CD8-positive, alpha-beta T cell (primary cell): ENCODE measurements at regions of chr17 and their contacts with region 1.

Region 1: DNA sequence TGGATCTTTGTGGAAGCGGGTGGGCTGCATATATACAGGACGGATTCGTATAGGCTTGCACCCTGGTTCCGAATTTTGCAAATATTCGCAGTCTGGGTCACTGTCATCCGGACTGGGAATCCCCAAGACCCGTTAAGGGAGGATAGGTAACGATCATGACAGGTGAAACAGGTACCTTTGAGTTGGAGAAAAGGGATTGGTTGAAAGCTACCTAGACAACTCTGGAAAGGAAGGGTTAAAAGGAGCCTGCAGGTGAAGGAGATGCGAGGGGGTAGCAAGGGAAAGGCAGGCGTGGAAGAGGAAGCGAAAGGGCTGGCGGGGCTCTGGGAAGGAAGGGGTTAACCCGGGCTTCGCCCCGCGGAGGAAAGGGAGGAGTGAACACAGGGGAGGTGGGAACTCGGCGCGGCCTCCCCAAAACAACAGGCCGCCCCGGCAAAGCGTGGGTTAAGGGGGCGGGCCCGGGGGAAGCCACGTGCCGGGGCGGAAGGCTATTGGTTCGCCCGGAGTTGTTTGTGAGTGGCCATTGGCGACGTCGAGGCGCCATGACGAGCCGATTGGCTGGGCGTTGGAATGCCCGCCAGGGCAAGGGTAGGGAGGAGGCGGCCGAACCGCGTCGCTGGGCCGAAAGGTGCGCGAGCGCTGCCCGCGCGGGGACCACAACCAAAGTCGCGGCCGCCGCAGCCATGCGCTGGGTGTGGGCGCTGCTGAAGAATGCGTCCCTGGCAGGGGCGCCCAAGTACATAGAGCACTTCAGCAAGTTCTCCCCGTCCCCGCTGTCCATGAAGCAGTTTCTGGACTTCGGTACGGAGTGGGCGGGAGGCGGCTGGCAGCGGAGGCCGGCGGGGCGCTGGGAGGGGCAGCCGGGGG is at the start of gene PDK2:
- DNase-seq: peak; percentile 94 to 98 (median 97)
- ATAC-seq: peak; percentile 94
- H3K4me3 ChIP-seq: peak within 1 kb of the TSS; percentile 69 to 80
- H3K4me3 Mint-ChIP-seq: peak within 1 kb of the TSS; percentile 99
- H3K27ac ChIP-seq: peak within 1 kb of the TSS; percentile 71 to 82
- H3K27ac Mint-ChIP-seq: peak within 1 kb of the TSS; percentile 97
- H3K4me1 ChIP-seq: peaks cover 15% of the 10 kb centered on the region
- H3K4me1 Mint-ChIP-seq: peaks cover 34% of the 10 kb centered on the region
- H3K27me3 ChIP-seq: no peaks in the 10 kb centered on the region
- H3K27me3 Mint-ChIP-seq: no peaks in the 10 kb centered on the region
- CTCF ChIP-seq: no peak
- total RNA-seq, gene PDK2: 8.4 to 10.4 TPM

Region 2: DNA sequence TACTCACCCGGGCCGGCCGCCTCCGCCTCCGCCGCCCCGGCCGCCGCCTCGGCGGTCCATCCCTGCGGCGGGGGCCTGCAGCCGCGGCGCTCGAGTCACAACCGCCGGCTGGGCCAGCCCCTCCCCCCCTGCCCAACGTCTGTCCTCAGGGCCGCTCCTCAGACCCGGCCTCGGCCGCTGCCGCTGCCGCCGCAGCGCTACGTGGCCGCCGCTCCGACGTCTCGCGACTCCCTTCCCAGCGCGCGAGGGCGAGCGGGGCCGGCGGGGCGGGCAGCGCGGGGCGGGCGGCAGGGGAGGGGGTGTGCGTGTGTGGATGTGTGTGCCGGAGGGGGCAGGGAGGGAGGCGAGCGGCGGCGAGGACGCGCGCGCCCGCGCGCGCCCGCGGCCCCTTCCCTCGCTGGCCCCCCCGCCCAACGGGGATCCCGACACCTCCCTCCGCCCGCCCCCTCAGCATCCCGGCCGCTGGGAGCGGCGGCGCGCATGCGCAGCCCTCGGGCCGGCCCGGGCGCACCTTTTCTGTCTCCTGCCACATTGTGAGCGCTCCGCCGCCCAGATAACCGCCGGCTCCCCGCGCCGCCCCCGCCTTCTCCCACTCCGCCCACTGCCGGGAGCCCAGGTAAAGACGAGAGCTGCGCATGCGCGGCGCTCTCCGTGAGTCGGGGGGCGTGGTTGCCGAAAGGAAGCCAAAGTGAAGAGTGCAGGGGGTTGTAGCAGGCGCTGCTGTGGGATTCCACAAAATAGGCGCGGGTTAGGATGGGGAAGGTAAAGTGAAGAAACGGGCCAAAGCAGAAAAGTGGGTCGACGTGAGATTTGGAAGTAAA is 732.9 kb before region 1 on chr17 and contains the start of gene ZNF652:
- CTCF ChIA-PET with region 1: no interaction called
- POLR2A ChIA-PET with region 1: no interaction called
- intact Hi-C with region 1: loop called in 1 of 2 experiments (anchors 2 kb)
- DNase-seq: peak; percentile 91 to 98 (median 95)
- ATAC-seq: peak; percentile 59
- H3K4me3 ChIP-seq: peak within 1 kb of the TSS; percentile 50 to 90
- H3K4me3 Mint-ChIP-seq: peak within 1 kb of the TSS; percentile 94
- H3K27ac ChIP-seq: peak within 1 kb of the TSS; percentile 58 to 75
- H3K27ac Mint-ChIP-seq: peak within 1 kb of the TSS; percentile 97
- H3K4me1 ChIP-seq: peaks cover 46% of the 10 kb centered on the region
- H3K4me1 Mint-ChIP-seq: peaks cover 68% of the 10 kb centered on the region
- H3K27me3 ChIP-seq: no peaks in the 10 kb centered on the region
- H3K27me3 Mint-ChIP-seq: no peaks in the 10 kb centered on the region
- CTCF ChIP-seq: no peak
- total RNA-seq, gene ZNF652: 28.1 to 28.6 TPM

Region 3: GRCh38 chr17:49707608-49708514 is 387.1 kb before region 1 on chr17 and contains the start of gene SLC35B1:
- CTCF ChIA-PET with region 1: no interaction called
- POLR2A ChIA-PET with region 1: no interaction called
- intact Hi-C with region 1: loop called (anchors 1 to 10 kb)
- DNase-seq: peak; percentile 96 to 100 (median 98)
- ATAC-seq: peak; percentile 97
- H3K4me3 ChIP-seq: peak within 1 kb of the TSS; percentile 87 to 93
- H3K4me3 Mint-ChIP-seq: peak within 1 kb of the TSS; percentile 93
- H3K27ac ChIP-seq: peak within 1 kb of the TSS; percentile 95 to 97
- H3K27ac Mint-ChIP-seq: peak within 1 kb of the TSS; percentile 98
- H3K4me1 ChIP-seq: peaks cover 21% of the 10 kb centered on the region
- H3K4me1 Mint-ChIP-seq: peaks cover 42% of the 10 kb centered on the region
- H3K27me3 ChIP-seq: no peaks in the 10 kb centered on the region
- H3K27me3 Mint-ChIP-seq: no peaks in the 10 kb centered on the region
- CTCF ChIP-seq: peak; percentile 80
- total RNA-seq, gene SLC35B1: 57.7 to 64.2 TPM

Region 4: DNA sequence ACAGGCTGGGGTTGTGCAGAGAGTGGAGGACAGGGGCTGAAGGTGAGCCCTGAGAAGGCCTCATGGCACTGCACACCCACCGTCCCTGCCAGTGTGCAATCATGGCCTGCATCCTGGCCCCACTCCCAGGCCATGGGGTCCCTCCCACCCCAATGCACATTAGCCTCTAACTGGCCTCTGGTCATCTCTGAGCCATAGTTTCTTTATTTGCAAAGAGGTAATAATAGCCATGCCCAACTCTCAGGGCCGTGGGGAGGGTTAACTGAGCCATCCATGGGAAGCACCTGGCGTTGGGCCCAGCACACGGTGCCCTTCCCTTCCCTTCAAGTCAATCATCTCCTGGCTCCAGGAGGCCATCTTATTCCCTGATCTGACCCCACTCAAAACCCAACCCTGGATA is 49.8 kb before region 1 on chr17:
- CTCF ChIA-PET with region 1: no interaction called
- POLR2A ChIA-PET with region 1: no interaction called
- intact Hi-C with region 1: no loop called
- DNase-seq: no peak
- ATAC-seq: no peak
- H3K4me3 ChIP-seq: no peak overlapping the region
- H3K4me3 Mint-ChIP-seq: no peak overlapping the region
- H3K27ac ChIP-seq: no peak overlapping the region
- H3K27ac Mint-ChIP-seq: no peak overlapping the region
- H3K4me1 ChIP-seq: no peaks in the 10 kb centered on the region
- H3K4me1 Mint-ChIP-seq: no peaks in the 10 kb centered on the region
- H3K27me3 ChIP-seq: no peaks in the 10 kb centered on the region
- H3K27me3 Mint-ChIP-seq: peaks cover 7% of the 10 kb centered on the region
- CTCF ChIP-seq: no peak

Region 5: DNA sequence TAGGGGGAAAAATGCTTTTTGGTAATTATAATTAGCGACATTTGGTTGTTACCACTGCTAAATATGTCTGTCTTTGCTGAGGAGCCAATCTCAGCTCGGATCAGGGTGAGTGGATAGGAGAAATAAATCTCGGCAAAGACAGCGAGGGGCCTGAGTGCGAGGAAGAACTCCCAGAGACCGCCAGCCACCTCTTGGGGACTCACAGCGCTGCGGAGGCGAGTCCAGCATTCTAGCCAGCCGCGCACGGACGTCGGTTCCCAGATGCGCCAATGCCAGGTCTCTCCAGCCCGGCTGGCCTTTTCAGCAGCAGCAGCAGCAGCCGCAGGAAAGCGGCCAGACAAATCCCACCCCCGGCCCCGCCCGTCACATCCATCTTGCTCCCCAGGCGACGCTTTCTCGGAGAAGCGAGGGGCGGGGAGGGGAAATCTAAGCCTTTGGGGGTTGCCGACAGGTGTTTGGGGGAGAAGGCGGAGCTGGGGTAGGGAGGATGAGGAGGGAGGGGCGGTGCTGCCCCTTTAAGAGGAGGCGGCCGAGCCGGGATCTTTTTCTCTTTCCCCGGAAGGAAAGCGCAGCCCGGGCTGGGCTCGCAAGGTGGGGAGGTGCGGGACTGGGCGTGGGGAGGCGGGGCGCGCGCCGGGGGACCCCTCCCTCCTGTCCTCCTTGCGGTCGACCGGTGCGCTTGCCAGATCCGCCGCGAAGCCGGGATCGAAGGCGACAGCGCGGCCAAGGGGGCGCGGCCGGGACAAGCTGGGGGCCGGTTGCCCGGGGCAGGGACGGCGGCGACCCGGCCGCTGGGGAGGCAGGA is 39.4 kb before region 1 on chr17 and contains the start of gene ITGA3:
- CTCF ChIA-PET with region 1: interaction called, 12 read pairs
- POLR2A ChIA-PET with region 1: interaction called, 9 read pairs
- intact Hi-C with region 1: loop called (anchors 1 kb)
- DNase-seq: peak in 8 of 9 experiments; percentile 36 to 72 (median 63)
- ATAC-seq: peak; percentile 69
- H3K4me3 ChIP-seq: peak within 1 kb of the TSS; percentile 64 to 67
- H3K4me3 Mint-ChIP-seq: peak within 1 kb of the TSS; percentile 89
- H3K27ac ChIP-seq: no peak within 1 kb of the TSS
- H3K27ac Mint-ChIP-seq: peak within 1 kb of the TSS; percentile 72
- H3K4me1 ChIP-seq: peaks cover 9% of the 10 kb centered on the region
- H3K4me1 Mint-ChIP-seq: peaks cover 19% of the 10 kb centered on the region
- H3K27me3 ChIP-seq: no peaks in the 10 kb centered on the region
- H3K27me3 Mint-ChIP-seq: no peaks in the 10 kb centered on the region
- CTCF ChIP-seq: no peak
- total RNA-seq, gene ITGA3: 1.6 to 2.0 TPM

Region 6: GRCh38 chr17:50139950-50140871 is 45.2 kb after region 1 on chr17:
- CTCF ChIA-PET with region 1: interaction called, 11 read pairs
- POLR2A ChIA-PET with region 1: no interaction called
- intact Hi-C with region 1: no loop called
- DNase-seq: peak; percentile 61 to 89 (median 83)
- ATAC-seq: peak; percentile 92
- H3K4me3 ChIP-seq: peak overlapping the region; percentile 7 to 24
- H3K4me3 Mint-ChIP-seq: peak overlapping the region; percentile 59
- H3K27ac ChIP-seq: peak overlapping the region in 1 of 2 experiments; percentile 47
- H3K27ac Mint-ChIP-seq: peak overlapping the region; percentile 70
- H3K4me1 ChIP-seq: peaks cover 52% of the 10 kb centered on the region
- H3K4me1 Mint-ChIP-seq: peaks cover 54% of the 10 kb centered on the region
- H3K27me3 ChIP-seq: no peaks in the 10 kb centered on the region
- H3K27me3 Mint-ChIP-seq: no peaks in the 10 kb centered on the region
- CTCF ChIP-seq: peak; percentile 92

Region 7: GRCh38 chr17:50200457-50201275 is 105.7 kb after region 1 on chr17:
- CTCF ChIA-PET with region 1: interaction called, 6 read pairs
- POLR2A ChIA-PET with region 1: no interaction called
- intact Hi-C with region 1: loop called (anchors 1 kb)
- DNase-seq: peak; percentile 66 to 87 (median 80)
- ATAC-seq: peak; percentile 49
- H3K4me3 ChIP-seq: peak overlapping the region; percentile 47 to 49
- H3K4me3 Mint-ChIP-seq: peak overlapping the region; percentile 78
- H3K27ac ChIP-seq: no peak overlapping the region
- H3K27ac Mint-ChIP-seq: peak overlapping the region; percentile 11
- H3K4me1 ChIP-seq: peaks cover 21% of the 10 kb centered on the region
- H3K4me1 Mint-ChIP-seq: peaks cover 25% of the 10 kb centered on the region
- H3K27me3 ChIP-seq: peaks cover 12 to 20% of the 10 kb centered on the region in 2 experiments
- H3K27me3 Mint-ChIP-seq: peaks cover 42% of the 10 kb centered on the region
- CTCF ChIP-seq: peak; percentile 100

Region 8: DNA sequence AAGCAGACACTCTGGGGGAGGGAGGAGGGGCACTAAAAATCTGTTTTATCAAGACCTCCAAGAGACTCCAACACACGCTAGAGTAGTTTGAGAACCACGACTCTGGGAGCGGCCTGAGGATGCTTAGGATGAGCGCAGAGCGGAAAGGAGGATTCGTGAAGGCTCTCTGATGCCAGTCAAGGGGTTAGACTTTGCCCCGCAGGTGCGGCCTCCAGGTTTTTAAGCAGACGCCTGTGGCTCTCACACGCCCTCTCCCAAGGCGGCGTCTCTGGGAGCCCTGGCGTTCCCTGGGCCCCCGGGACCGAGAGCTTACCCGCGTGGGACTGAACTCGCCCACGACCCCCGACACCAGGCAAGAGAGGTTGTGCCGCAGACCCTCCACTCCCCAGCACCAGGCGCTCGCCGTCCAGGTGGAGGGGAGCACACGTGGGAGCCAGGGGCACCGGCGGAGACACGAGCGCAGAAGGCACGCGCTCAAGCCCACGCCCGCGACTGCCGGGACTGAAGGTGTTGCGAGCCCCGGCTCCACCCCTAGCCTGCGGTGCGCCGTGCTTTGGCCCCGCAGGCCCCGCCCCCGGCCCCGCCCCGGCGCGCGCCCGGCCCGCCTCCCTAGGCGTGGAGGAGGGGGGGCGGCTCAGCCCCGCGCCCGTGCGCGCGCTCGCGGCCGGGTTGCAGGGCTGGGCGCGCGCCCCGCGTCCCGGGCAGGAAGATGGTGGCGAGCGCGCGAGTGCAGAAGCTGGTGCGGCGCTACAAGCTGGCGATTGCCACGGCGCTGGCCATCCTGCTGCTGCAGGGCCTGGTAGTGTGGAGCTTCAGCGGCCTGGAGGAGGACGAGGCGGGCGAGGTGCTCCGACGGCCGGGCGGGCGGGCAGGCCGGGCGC is 250.7 kb after region 1 on chr17 and contains the start of gene XYLT2:
- CTCF ChIA-PET with region 1: no interaction called
- POLR2A ChIA-PET with region 1: no interaction called
- intact Hi-C with region 1: loop called in 1 of 2 experiments (anchors 2 kb)
- DNase-seq: peak; percentile 83 to 96 (median 93)
- ATAC-seq: peak; percentile 94
- H3K4me3 ChIP-seq: peak within 1 kb of the TSS; percentile 78 to 90
- H3K4me3 Mint-ChIP-seq: peak within 1 kb of the TSS; percentile 93
- H3K27ac ChIP-seq: peak within 1 kb of the TSS; percentile 56 to 77
- H3K27ac Mint-ChIP-seq: peak within 1 kb of the TSS; percentile 91
- H3K4me1 ChIP-seq: peaks cover 29% of the 10 kb centered on the region
- H3K4me1 Mint-ChIP-seq: peaks cover 37% of the 10 kb centered on the region
- H3K27me3 ChIP-seq: no peaks in the 10 kb centered on the region
- H3K27me3 Mint-ChIP-seq: no peaks in the 10 kb centered on the region
- CTCF ChIP-seq: no peak
- total RNA-seq, gene XYLT2: 9.0 to 9.4 TPM